ENCODE measurements at regions of chr10 and their contacts with region 1.

Region 1: GRCh38 chr10:27360581-27361172 is 120.1 kb upstream of the ACBD5 start:
- DNase-seq: peak; percentile 65 to 83 (median 67)
- ATAC-seq: peak; percentile 32 to 82 (median 74)
- H3K4me3 ChIP-seq: no peak overlapping the region
- H3K27ac ChIP-seq: no peak overlapping the region
- H3K4me1 ChIP-seq: no peaks in the 10 kb centered on the region
- H3K27me3 ChIP-seq: no peaks in the 10 kb centered on the region
- CTCF ChIP-seq: peak; percentile 60 to 83 (median 70)
- POLR2A ChIP-seq: no peak

Region 2: DNA sequence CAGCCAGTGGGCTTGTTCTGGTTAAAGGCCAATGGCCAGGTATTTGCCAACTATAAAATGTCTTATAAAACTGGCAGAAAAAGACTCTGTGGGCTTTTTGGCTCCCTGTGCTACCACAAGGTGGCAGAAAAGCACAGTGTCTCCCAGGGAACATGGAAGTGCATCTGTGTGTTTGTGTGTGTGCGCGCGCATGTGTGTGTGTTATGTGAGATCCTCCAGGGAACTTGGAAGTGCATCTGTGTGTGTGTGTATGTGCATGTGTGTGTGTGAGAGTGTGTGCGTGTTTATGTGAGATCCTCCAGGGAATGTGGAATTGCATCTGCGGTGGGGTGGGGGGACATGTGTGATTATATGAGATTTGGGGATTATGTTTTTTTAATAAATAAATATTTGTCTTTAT is 469.7 kb before region 1 on chr10:
- intact Hi-C with region 1: loop called in 3 of 10 experiments (anchors 2 to 5 kb)
- DNase-seq: peak in 1 of 5 donors; percentile 32
- ATAC-seq: no peak
- H3K4me3 ChIP-seq: no peak overlapping the region
- H3K27ac ChIP-seq: no peak overlapping the region
- H3K4me1 ChIP-seq: no peaks in the 10 kb centered on the region
- H3K27me3 ChIP-seq: peaks cover 0 to 11% (median 0%) of the 10 kb centered on the region in 9 donors
- CTCF ChIP-seq: peak in 8 of 12 donors; percentile 14 to 36 (median 22)
- POLR2A ChIP-seq: no peak

Region 3: DNA sequence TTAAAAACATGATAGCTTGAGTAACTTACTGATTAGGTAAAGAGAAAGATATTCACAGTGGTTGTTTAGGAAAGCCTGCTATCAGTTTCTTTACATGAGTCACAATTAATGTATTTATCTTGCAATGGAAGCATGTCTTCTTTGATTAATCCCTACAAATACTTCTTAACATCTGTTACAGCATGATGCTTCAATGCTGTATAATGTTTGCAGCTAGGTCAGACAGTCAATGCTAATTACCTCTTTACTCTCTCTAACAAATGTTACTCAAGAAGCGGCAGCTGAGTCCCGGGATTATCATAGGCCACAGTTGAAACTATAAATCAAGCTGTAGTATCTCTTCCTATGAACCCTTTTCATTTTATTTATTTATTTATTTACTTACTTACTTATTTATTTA is 153.3 kb before region 1 on chr10:
- intact Hi-C with region 1: loop called in 1 of 10 experiments (anchors 10 kb)
- DNase-seq: no peak
- ATAC-seq: no peak
- H3K4me3 ChIP-seq: no peak overlapping the region
- H3K27ac ChIP-seq: no peak overlapping the region
- H3K4me1 ChIP-seq: no peaks in the 10 kb centered on the region
- H3K27me3 ChIP-seq: no peaks in the 10 kb centered on the region
- CTCF ChIP-seq: no peak
- POLR2A ChIP-seq: no peak

Measured in heart left ventricle (tissue), 16 donors.